ENCODE measurements at regions of chr3 and their contacts with region 1.

Region 1: DNA sequence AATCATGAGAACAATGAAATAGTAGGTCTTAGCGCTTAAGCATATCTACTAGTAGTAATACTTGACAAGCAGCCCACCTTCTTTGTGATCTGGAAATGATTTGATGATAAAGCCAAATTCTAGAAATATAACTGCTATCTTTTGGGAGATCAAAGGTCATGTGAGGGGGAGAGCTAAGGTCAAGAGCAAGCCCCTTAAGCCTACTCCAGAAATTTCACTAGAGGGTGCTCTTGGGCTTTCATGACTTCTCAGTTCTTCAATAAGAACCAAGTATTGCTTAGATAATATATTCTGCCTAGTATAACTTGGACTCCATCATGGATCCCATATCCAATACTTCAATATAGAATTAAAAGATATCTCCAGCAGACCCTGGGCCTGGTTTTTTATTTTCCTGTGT is 319.6 kb downstream of the ZBTB20 start:
- DNase-seq: peak in 16 of 42 donors; percentile 10 to 73 (median 38)

Region 2: DNA sequence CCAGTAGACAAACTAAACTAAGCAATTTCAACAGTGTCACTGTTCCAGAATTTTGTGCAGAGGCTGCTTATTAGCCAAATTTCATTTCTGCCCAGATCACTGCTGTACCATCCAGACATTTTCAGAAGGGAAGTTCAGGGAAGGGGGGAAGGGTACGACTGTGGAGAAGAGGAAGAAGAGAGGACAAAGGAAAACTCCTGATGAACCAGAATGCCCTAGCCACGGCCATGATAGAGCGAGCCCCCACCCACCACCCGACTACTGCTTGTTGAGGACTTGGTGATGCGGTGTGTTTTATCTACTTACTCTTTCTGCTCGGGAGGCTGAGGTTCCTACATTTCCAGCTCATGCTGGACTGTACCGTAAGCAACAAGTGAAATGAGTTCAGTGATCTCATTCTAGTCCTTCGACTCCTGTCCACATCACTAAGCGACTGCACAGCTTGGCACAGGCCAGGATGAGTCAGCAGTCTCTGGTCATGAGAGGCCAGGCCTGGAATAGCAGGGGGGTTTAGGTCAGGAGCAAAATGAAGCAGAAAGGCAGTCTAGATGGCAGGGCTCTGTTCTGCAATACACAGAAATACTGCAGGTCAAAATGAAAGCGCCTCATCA is 202.8 kb before region 1 on chr3:
- intact Hi-C with region 1: no loop called
- DNase-seq: peak; percentile 46 to 96 (median 90)

Region 3: DNA sequence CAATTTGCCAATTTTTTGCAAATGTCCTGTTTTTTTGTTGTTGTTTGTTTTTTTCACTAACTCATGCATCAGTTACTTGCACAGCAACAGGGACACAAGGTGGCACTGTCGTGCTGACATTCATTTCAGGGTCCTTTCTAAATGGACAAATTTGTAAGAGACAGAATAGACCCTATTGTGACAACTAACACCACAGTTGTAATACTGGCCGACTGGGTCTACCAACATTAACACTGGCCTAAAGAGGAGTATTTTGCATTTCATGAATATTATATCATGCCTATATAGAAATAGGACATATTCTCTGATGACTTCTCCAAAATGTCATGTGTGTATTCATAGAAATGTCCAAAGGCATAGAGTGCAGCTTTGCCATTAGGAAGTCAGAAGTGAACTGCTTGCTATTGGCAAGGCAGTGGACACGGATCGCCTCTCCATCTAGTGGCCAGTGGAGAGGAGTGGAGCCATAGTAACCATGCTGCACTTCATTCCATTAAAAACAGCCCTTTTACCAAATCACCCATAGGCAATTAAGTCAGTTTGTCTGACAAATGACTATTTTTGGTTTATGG is 264.8 kb after region 1 on chr3:
- intact Hi-C with region 1: loop called (anchors 5 kb)
- DNase-seq: peak; percentile 53 to 91 (median 81)

Region 4: GRCh38 chr3:115147329-115148141 is 320.0 kb after region 1 on chr3:
- intact Hi-C with region 1: loop called (anchors 10 kb)
- DNase-seq: peak; percentile 95 to 100 (median 99)

Region 5: DNA sequence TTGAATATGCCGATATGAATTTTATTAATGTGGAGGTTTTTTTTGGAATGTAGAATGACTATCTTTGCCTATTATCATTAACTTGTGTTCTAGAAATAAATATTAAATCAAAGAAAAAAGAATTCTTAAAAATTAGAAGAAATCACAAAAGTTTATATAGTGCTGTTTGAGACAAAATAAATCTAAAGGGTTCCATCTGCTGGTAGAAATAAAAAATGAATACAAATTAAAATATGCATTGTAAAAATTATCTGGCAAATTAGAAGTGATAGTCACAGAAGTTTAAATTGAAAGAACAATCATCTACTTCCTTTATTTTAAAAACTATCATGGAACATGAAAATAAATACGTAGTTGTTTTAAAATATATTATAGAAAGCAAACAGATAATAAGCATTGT is 342.3 kb after region 1 on chr3:
- intact Hi-C with region 1: loop called (anchors 10 kb)
- DNase-seq: no peak